ENCODE measurements at regions of chr6 and their contacts with region 1.

Region 1: GRCh38 chr6:107847844-107848802 is 24.0 kb upstream of the SCML4 start:
- DNase-seq: peak; percentile 78
- H3K4me3 Mint-ChIP-seq: peak overlapping the region; percentile 70
- H3K27ac Mint-ChIP-seq: peak overlapping the region; percentile 88
- H3K4me1 Mint-ChIP-seq: peaks cover 34% of the 10 kb centered on the region
- H3K27me3 Mint-ChIP-seq: peaks cover 6% of the 10 kb centered on the region

Region 2: GRCh38 chr6:107495196-107495643 is 352.9 kb before region 1 on chr6:
- CTCF ChIA-PET with region 1: no interaction called
- POLR2A ChIA-PET with region 1: no interaction called
- DNase-seq: no peak
- H3K4me3 Mint-ChIP-seq: no peak overlapping the region
- H3K27ac Mint-ChIP-seq: no peak overlapping the region
- H3K4me1 Mint-ChIP-seq: peaks cover 8% of the 10 kb centered on the region
- H3K27me3 Mint-ChIP-seq: peaks cover 46% of the 10 kb centered on the region

Region 3: DNA sequence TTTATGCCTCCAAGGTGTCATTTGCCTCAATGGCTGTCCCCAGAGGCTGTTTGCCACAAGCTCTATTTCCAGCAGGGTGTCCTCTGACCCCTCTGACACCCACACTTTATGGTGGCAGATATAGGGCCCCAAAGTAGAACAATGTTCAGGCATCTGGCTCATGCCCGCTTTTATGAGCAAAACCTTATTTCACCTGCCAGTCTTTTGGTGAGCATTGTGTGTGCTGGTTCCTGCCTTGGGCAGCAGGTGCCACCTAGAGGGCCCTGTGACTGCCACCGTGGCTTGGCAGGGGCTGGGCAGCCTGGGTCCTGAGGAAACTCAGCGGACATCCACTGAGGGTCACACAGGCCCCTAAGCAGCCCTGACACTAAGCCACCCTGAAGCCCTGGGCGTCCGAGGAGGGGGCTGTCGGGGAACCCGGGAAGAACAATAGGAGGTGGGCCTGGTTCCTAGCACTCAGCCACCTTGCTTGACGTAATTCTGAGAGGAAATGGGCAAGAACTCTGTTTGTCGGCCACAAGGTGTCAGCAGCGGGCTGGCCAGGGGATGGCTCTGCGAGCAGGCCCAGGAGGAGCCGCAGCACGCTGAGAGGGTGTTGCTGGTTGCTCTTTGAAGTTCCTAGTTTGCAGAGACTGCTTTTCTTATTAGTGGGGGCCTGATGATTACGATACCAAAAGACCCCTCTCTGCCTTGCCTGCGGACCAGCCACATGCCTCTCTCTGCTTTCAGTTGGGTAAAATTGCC is 173.0 kb before region 1 on chr6:
- CTCF ChIA-PET with region 1: interaction called, 19 read pairs
- POLR2A ChIA-PET with region 1: no interaction called
- DNase-seq: peak; percentile 90
- H3K4me3 Mint-ChIP-seq: peak overlapping the region; percentile 38
- H3K27ac Mint-ChIP-seq: peak overlapping the region; percentile 88
- H3K4me1 Mint-ChIP-seq: peaks cover 26% of the 10 kb centered on the region
- H3K27me3 Mint-ChIP-seq: peaks cover 3% of the 10 kb centered on the region

Region 4: GRCh38 chr6:107712665-107713551 is 135.2 kb before region 1 on chr6:
- CTCF ChIA-PET with region 1: interaction called, 16 read pairs
- POLR2A ChIA-PET with region 1: no interaction called
- DNase-seq: peak; percentile 34
- H3K4me3 Mint-ChIP-seq: peak overlapping the region; percentile 34
- H3K27ac Mint-ChIP-seq: peak overlapping the region; percentile 85
- H3K4me1 Mint-ChIP-seq: peaks cover 69% of the 10 kb centered on the region
- H3K27me3 Mint-ChIP-seq: no peaks in the 10 kb centered on the region

Region 5: DNA sequence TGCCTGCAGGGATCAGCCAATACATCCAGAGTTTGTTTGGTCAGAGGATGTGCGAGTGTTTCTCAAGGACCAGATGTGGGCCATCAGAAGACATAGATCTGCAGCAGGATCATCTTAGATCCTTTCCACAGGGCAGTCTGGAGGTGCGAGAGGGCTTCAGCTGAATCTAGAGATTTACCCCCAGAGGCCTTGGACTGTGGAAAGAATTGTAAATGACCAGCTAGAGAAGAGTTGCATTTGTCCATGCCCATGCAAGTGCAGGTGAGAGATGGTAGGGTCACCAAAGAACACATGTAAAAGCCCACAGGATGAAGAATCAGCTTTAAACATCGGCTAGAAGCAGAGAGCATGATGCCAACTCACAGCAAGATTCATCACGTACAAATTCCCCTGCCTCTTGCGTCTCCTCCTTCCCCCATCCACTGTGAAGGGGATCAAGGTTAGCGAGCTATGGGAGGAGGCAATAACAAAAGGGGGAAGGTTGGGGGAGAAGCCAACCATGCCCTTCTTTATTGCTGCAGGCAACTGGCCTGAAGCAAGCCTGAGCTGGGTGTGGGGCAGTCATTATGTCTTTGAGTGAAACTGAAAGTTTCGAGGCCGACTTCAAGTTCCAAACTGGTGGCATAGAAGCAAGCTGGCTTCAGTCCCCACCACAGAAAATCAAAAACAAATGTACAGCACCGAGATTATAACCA is 107.5 kb before region 1 on chr6:
- CTCF ChIA-PET with region 1: interaction called, 16 read pairs
- POLR2A ChIA-PET with region 1: no interaction called
- DNase-seq: peak; percentile 66
- H3K4me3 Mint-ChIP-seq: peak overlapping the region; percentile 61
- H3K27ac Mint-ChIP-seq: peak overlapping the region; percentile 93
- H3K4me1 Mint-ChIP-seq: peaks cover 68% of the 10 kb centered on the region
- H3K27me3 Mint-ChIP-seq: no peaks in the 10 kb centered on the region

Region 6: GRCh38 chr6:107820338-107821261 is 27.5 kb before region 1 on chr6:
- CTCF ChIA-PET with region 1: interaction called, 21 read pairs
- POLR2A ChIA-PET with region 1: interaction called, 4 read pairs
- DNase-seq: peak; percentile 63
- H3K4me3 Mint-ChIP-seq: peak overlapping the region; percentile 79
- H3K27ac Mint-ChIP-seq: peak overlapping the region; percentile 96
- H3K4me1 Mint-ChIP-seq: peaks cover 83% of the 10 kb centered on the region
- H3K27me3 Mint-ChIP-seq: no peaks in the 10 kb centered on the region

Region 7: GRCh38 chr6:107832151-107833056 is 15.7 kb before region 1 on chr6:
- CTCF ChIA-PET with region 1: interaction called, 49 read pairs
- POLR2A ChIA-PET with region 1: no interaction called
- DNase-seq: no peak
- H3K4me3 Mint-ChIP-seq: no peak overlapping the region
- H3K27ac Mint-ChIP-seq: no peak overlapping the region
- H3K4me1 Mint-ChIP-seq: peaks cover 31% of the 10 kb centered on the region
- H3K27me3 Mint-ChIP-seq: no peaks in the 10 kb centered on the region

Region 8: DNA sequence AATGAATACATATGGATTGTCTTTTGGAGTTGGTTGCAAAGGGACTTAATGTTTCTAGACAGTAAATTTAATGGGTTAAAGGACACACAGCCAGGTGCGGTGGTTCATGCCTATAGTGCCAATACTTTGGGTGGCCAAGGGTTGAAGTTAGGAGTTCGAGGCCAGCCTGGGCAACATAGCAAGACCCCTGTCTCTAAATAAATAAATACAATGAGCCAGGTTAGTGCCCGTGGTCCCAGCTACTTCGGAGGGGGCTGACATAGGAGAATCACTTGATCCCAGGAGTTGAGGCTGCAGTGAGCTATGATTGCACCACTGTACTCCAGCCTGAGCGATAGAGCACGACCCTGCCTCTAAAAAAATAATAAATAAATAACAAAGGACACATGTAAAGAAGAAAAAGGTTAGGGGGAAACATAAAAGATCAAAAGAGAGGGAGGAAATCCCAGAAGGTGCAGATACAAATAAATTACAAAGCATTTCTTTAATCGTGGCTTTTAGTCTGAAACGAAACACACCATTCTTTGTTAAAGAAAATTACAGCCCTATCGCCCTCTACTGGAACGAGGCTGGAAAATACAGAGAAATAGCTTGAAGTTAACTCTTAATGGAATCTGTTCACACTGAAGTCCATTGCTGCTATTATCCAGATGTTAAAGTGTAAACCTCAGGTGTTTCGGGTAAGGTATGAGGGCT is 18.6 kb after region 1 on chr6:
- CTCF ChIA-PET with region 1: interaction called, 14 read pairs
- POLR2A ChIA-PET with region 1: no interaction called
- DNase-seq: peak; percentile 64
- H3K4me3 Mint-ChIP-seq: no peak overlapping the region
- H3K27ac Mint-ChIP-seq: no peak overlapping the region
- H3K4me1 Mint-ChIP-seq: peaks cover 19% of the 10 kb centered on the region
- H3K27me3 Mint-ChIP-seq: no peaks in the 10 kb centered on the region

Measured in activated CD4-positive, alpha-beta T cell treated with anti-CD3 and anti-CD28 coated beads, Interleukin-2, amount 10 ng/mL, durations not matched to agents 7 days and 5 days (primary cell).